ENCODE measurements at regions of chr15 and their contacts with region 1.

Region 1: DNA sequence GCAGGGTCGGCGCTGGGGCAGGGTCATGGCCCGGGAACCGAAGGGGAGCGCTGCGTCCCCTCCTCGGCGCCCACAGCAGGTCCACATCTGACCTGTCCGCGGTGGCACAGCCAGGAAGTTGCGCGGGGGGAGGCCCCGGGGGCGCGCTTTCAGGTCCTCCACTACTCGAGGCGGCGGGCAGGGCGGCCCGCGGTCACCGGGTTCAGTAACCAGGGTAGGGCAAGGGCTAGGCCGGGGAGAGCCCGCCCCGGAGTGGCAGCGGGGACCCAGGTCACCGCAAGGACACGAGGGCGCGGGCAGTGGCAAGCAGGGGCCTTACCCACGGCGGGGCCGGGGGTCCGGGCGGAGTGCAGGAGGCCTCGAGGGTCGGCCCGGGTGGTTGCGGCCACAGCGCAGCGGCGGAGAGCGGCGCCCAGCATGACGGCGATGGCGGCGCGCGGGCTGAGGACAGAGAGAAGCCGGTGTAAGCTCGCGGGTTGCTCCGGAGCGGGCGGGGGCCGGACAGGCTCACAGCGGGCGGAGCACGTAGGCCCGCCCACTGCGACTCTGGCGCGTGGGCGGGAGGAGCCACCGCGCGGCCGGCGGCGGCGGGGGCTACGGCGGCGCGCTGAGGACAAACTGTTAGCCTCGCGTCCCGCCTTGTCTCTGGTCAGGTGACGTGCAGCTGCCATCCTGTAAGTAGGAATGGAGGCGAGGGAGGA is at the start of gene COX5A:
- DNase-seq: peak; percentile 83 to 97 (median 88)
- ATAC-seq: peak; percentile 96
- H3K4me3 ChIP-seq: peak within 1 kb of the TSS; percentile 73 to 86
- H3K4me3 Mint-ChIP-seq: peak within 1 kb of the TSS; percentile 88
- H3K27ac ChIP-seq: peak within 1 kb of the TSS; percentile 72 to 73
- H3K27ac Mint-ChIP-seq: peak within 1 kb of the TSS; percentile 92
- H3K4me1 ChIP-seq: peaks cover 14% of the 10 kb centered on the region
- H3K4me1 Mint-ChIP-seq: peaks cover 31% of the 10 kb centered on the region
- H3K27me3 ChIP-seq: no peaks in the 10 kb centered on the region
- H3K27me3 Mint-ChIP-seq: no peaks in the 10 kb centered on the region
- CTCF ChIP-seq: no peak
- total RNA-seq, gene COX5A: 40.0 to 42.6 TPM

Region 2: DNA sequence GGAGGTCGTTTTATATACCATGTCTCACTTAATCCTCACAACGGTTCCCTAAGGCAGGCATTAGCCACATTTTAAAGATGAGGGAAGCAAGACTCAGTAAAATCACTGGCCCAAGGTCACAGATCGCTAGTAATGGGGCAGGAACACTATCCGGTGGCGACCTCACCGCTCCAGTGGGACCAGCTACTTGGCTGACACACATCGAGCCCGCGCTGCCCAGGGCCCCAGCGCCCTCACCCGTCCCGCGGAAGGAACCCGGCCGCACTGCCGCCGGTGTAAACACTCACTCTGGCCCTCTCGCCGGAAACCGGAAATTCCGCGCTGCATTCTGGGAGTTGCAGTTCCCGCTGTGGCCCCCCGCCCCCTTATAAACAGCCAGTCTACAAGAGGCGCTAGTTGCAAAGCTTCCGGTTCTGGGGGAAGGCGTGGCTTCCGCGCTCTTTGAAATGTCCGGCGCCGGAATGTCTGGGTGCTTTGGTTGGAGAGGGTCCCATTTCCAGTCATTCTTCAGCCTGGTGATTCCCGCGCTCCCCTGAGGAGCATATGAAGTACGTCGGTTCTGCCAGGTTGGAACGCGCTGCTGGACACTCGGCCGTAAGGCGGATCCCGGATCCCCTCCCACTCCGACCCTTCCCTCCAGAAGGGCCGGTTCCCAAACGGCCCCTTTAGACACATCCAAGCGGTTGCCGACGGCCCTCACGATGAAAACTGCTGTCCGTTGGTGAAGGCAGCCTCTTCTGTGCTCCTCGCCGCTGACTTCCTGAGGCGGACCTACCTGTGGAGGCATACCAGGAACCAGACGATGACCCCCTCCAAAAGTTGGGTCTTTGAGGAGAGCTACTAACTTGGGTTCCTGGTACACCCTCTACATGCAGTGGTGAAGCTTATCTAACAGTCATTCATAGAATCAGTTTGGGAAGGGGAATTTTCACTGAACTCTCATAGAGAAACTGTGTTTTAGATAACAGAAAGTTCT is 476.6 kb before region 1 on chr15 and contains the start of gene UBL7:
- CTCF ChIA-PET with region 1: no interaction called
- POLR2A ChIA-PET with region 1: no interaction called
- intact Hi-C with region 1: loop called in 1 of 2 experiments (anchors 5 kb)
- DNase-seq: peak; percentile 93 to 99 (median 96)
- ATAC-seq: peak; percentile 98
- H3K4me3 ChIP-seq: peak within 1 kb of the TSS; percentile 74 to 85
- H3K4me3 Mint-ChIP-seq: peak within 1 kb of the TSS; percentile 93
- H3K27ac ChIP-seq: peak within 1 kb of the TSS; percentile 53 to 83
- H3K27ac Mint-ChIP-seq: peak within 1 kb of the TSS; percentile 94
- H3K4me1 ChIP-seq: peaks cover 21% of the 10 kb centered on the region
- H3K4me1 Mint-ChIP-seq: peaks cover 50% of the 10 kb centered on the region
- H3K27me3 ChIP-seq: no peaks in the 10 kb centered on the region
- H3K27me3 Mint-ChIP-seq: no peaks in the 10 kb centered on the region
- CTCF ChIP-seq: no peak
- total RNA-seq, gene UBL7: 21.7 to 23.1 TPM

Region 3: DNA sequence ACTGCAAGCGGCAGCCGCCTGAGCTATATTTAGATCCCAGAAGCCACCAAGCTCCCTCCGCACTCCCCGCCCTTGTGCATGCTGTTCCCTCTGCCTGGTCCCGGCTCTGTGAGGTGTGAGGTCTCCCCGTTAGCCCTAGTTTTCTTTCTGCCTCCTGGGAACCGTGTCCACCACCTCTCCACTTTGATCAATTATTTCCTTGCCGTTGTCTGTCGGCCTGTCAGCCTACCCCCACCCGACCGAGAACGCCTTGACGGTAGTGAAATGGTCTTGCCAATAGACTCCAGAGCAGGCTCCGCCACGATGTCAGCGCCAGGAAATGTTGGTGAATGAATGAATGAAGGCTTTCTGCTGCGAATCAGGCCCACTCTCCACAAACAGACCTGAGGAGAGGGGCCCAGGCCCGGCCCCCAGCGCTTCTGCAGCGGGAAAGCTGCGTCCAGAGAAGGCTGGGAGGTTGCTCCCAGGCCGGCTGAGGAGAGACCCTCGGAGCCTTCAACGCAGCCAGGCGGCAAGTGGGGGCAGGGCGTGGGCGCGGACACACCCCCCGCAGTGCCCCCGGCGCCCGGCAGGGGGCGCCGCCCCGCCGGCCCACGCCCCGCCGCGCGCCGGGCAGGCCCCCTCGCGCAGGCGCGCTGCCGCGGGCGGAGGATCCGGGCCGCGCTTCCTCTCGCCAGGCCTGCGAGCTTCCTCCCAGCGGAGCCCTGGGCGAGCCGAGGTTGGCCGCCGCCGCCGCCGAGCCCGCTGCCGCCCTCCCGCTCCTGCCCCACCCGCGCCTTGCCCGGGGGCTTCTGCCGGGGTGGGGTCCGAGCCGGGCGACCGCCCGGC is 156.1 kb before region 1 on chr15 and contains the start of gene CSK:
- CTCF ChIA-PET with region 1: no interaction called
- POLR2A ChIA-PET with region 1: interaction called, 3 read pairs
- intact Hi-C with region 1: loop called (anchors 1 to 5 kb)
- DNase-seq: peak; percentile 56 to 92 (median 79)
- ATAC-seq: peak; percentile 63
- H3K4me3 ChIP-seq: peak within 1 kb of the TSS; percentile 93 to 98
- H3K4me3 Mint-ChIP-seq: peak within 1 kb of the TSS; percentile 85
- H3K27ac ChIP-seq: peak within 1 kb of the TSS; percentile 74 to 90
- H3K27ac Mint-ChIP-seq: peak within 1 kb of the TSS; percentile 93
- H3K4me1 ChIP-seq: peaks cover 70% of the 10 kb centered on the region
- H3K4me1 Mint-ChIP-seq: peaks cover 66% of the 10 kb centered on the region
- H3K27me3 ChIP-seq: no peaks in the 10 kb centered on the region
- H3K27me3 Mint-ChIP-seq: no peaks in the 10 kb centered on the region
- CTCF ChIP-seq: peak; percentile 56
- total RNA-seq, gene CSK: 99.5 to 118 TPM

Region 4: DNA sequence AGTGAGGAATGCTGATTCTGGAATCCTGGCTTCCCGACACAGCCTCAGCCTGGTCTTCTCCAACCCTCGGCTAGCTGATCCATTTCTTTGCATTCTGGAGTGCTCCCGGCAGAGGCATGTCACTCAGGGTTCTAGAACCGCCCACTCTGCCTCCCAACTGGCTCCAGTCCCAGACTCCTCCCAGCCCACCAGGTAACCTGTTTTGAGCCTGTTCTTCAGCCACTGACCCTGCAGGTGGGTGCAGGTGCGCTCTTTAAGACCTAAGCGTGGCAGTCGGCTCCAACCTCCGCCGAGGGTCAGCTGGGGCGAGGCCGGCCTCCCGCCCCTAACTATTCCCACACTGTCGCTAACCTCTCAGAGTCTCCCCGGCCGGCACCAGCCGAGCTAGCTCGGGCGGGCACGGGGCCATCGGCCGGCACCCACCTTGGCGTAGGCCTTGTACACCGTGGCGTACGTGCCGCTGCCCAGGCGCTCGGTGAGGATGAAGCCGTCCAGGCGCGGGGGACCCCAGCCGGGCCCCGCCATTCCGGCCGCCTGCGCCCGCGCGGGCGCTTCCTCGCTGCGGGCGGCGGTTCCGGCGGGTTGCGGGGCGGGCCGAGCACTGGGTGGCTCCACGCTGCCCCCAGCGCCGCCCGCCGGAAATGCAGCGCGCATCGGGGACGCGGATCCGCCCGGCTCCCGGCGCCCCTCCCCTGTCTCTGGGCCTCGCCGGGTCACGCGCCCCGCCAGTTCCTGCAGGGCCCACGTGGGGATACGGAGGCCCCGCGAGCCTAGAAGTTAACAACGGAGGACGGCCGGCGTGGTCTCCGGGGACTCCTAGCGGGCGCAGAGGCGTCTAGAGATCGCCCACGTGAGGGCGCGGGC is 94.9 kb before region 1 on chr15 and contains the start of gene ULK3:
- CTCF ChIA-PET with region 1: no interaction called
- POLR2A ChIA-PET with region 1: no interaction called
- intact Hi-C with region 1: loop called (anchors 1 kb)
- DNase-seq: peak; percentile 88 to 96 (median 92)
- ATAC-seq: peak; percentile 92
- H3K4me3 ChIP-seq: peak within 1 kb of the TSS; percentile 90 to 97
- H3K4me3 Mint-ChIP-seq: peak within 1 kb of the TSS; percentile 91
- H3K27ac ChIP-seq: peak within 1 kb of the TSS; percentile 72 to 78
- H3K27ac Mint-ChIP-seq: peak within 1 kb of the TSS; percentile 93
- H3K4me1 ChIP-seq: peaks cover 43% of the 10 kb centered on the region
- H3K4me1 Mint-ChIP-seq: peaks cover 48% of the 10 kb centered on the region
- H3K27me3 ChIP-seq: no peaks in the 10 kb centered on the region
- H3K27me3 Mint-ChIP-seq: no peaks in the 10 kb centered on the region
- CTCF ChIP-seq: peak; percentile 71
- total RNA-seq, gene ULK3: 34.3 to 35.1 TPM

Region 5: GRCh38 chr15:74889883-74890664 is 47.7 kb before region 1 on chr15 and contains the start of gene MPI:
- CTCF ChIA-PET with region 1: no interaction called
- POLR2A ChIA-PET with region 1: no interaction called
- intact Hi-C with region 1: loop called (anchors 1 kb)
- DNase-seq: peak; percentile 66 to 89 (median 83)
- ATAC-seq: peak; percentile 95
- H3K4me3 ChIP-seq: peak within 1 kb of the TSS; percentile 80 to 82
- H3K4me3 Mint-ChIP-seq: peak within 1 kb of the TSS; percentile 92
- H3K27ac ChIP-seq: peak within 1 kb of the TSS; percentile 79
- H3K27ac Mint-ChIP-seq: peak within 1 kb of the TSS; percentile 88
- H3K4me1 ChIP-seq: peaks cover 39% of the 10 kb centered on the region
- H3K4me1 Mint-ChIP-seq: peaks cover 46% of the 10 kb centered on the region
- H3K27me3 ChIP-seq: no peaks in the 10 kb centered on the region
- H3K27me3 Mint-ChIP-seq: no peaks in the 10 kb centered on the region
- CTCF ChIP-seq: no peak
- total RNA-seq, gene MPI: 18.3 to 19.9 TPM

Region 6: DNA sequence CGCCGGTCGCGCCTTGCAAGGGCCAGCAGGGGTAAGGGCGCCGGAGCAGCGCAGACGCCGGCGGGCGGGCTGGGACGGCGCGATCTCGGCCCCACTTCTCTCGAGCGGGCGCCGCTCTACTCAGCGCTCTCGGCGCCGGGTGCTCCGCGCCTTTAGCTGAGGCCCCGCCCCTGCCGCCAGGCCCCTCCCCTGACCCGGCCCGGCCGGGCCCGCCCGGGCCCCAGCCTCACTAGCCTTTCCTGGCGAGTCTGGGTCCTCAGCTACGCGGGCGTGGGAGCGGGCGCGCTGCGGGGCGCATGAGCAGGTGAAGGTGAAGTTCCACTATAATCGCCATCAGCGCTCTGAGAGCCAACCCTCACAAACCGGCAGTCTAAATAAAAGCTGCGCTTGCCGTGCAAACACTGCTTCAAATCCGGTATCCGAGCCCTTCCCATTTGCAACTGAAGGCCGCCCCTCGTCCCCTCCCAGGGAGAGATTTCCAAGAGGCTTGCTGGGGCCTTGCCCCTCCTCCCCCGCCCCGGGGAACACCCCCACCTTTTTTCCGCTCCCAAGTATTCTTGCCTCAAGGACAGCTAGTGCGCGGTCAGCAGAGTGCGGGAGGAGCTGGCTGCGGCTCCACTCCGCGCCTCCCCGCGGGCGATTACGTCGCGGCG is 19.0 kb after region 1 on chr15 and contains the start of gene RPP25:
- CTCF ChIA-PET with region 1: interaction called, 3 read pairs
- POLR2A ChIA-PET with region 1: interaction called, 4 read pairs
- intact Hi-C with region 1: loop called in 1 of 2 experiments (anchors 1 kb)
- DNase-seq: peak; percentile 22 to 78 (median 66)
- ATAC-seq: peak; percentile 89
- H3K4me3 ChIP-seq: peak within 1 kb of the TSS; percentile 56 to 65
- H3K4me3 Mint-ChIP-seq: peak within 1 kb of the TSS; percentile 81
- H3K27ac ChIP-seq: no peak within 1 kb of the TSS
- H3K27ac Mint-ChIP-seq: no peak within 1 kb of the TSS
- H3K4me1 ChIP-seq: peaks cover 26% of the 10 kb centered on the region
- H3K4me1 Mint-ChIP-seq: peaks cover 30% of the 10 kb centered on the region
- H3K27me3 ChIP-seq: peaks cover 17 to 28% of the 10 kb centered on the region in 2 experiments
- H3K27me3 Mint-ChIP-seq: peaks cover 25% of the 10 kb centered on the region
- CTCF ChIP-seq: no peak
- total RNA-seq, gene RPP25: 0.22 to 0.28 TPM

Region 7: DNA sequence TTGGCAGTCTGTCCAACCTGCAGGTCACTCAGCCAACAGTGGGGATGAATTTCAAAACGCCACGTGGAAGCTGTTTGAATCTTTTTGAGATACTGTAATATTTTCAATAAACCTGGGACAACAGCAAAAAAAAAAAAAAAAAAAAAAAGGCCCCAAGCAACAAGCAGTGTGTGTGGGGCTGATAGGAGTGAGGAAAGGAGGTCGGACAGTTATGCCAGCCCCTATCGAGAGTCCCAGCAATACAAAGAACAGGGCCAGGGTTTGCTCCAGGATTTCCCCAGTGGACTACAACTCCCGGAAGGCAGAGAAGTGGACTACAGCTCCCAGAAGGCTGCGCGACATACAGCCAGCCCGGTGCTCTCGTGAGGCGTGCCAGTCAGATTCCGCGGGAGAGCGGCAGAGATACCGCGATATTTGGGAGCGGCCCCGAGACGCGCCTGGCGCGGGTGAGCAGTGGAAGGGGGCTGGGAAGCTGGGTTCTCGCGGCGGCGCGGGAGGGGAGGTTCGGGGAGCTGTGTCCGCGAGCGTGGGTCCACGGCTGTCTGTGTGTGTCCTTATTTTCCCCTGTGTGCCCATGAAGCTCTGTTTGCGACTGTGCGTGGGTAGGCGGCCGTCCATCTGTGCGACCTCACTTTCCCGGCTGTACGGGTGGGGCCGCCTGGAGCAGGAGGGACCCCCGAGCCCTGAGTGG is 85.6 kb after region 1 on chr15 and contains the start of gene PPCDC:
- CTCF ChIA-PET with region 1: no interaction called
- POLR2A ChIA-PET with region 1: no interaction called
- intact Hi-C with region 1: loop called in 1 of 2 experiments (anchors 1 kb)
- DNase-seq: peak; percentile 81 to 96 (median 93)
- ATAC-seq: peak; percentile 100
- H3K4me3 ChIP-seq: peak within 1 kb of the TSS; percentile 82 to 93
- H3K4me3 Mint-ChIP-seq: peak within 1 kb of the TSS; percentile 92
- H3K27ac ChIP-seq: peak within 1 kb of the TSS; percentile 76 to 77
- H3K27ac Mint-ChIP-seq: peak within 1 kb of the TSS; percentile 92
- H3K4me1 ChIP-seq: peaks cover 8% of the 10 kb centered on the region
- H3K4me1 Mint-ChIP-seq: peaks cover 14% of the 10 kb centered on the region
- H3K27me3 ChIP-seq: no peaks in the 10 kb centered on the region
- H3K27me3 Mint-ChIP-seq: no peaks in the 10 kb centered on the region
- CTCF ChIP-seq: no peak
- total RNA-seq, gene PPCDC: 6.0 to 6.5 TPM